HEK293 (cell line): ENCODE measurements at regions of chr16 and their contacts with region 1.

Region 1: DNA sequence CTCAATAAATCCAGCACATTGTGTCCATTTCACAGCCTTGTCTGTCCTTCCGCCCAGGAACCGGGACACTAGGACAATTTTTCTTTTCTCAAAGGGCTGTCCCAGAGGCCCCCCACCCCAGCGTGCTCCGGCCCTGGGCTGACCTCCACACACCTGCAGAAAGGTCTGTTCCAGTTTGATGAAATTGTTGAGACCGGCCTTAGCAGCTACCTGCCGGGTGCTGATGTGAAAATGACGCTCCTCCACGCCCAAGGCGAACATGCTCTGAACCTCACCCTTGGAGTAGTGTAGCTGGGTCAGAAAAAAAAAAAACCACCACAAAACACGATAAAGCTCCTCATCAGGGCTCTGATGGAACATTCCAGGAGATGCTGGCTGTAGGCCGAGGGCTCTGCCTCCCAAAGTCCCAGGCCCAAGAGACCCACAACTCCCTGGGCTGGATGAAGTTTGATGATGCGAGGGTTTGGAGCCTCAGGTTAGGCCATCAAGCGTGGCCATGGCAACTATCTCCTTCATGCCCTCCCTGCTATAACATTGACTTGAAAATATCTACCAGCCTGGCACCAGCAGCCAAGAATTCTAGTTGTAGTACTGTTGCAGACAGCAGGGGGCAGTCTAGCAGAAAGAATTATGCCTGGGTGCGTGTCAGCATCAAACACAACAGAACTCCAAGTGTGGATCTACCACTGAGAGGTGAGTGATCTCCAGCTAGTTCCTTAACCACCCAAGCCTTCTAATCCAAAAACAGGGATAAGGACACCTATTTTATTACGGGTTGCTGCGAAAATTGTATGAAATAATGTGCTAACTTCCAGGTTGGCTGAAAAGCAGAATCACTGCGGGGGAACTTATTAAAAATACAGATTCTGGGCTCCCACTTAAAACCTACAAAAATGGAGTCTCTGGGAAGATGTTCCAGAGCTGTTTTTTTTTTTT is 62.1 kb downstream of the RMI2 start:
- H3K4me3 ChIP-seq: no peak overlapping the region
- H3K27ac ChIP-seq: no peak overlapping the region
- H3K4me1 ChIP-seq: no peaks in the 10 kb centered on the region
- CTCF ChIP-seq: peak; percentile 50; the same call in 1 of the 2 replicates

Region 2: DNA sequence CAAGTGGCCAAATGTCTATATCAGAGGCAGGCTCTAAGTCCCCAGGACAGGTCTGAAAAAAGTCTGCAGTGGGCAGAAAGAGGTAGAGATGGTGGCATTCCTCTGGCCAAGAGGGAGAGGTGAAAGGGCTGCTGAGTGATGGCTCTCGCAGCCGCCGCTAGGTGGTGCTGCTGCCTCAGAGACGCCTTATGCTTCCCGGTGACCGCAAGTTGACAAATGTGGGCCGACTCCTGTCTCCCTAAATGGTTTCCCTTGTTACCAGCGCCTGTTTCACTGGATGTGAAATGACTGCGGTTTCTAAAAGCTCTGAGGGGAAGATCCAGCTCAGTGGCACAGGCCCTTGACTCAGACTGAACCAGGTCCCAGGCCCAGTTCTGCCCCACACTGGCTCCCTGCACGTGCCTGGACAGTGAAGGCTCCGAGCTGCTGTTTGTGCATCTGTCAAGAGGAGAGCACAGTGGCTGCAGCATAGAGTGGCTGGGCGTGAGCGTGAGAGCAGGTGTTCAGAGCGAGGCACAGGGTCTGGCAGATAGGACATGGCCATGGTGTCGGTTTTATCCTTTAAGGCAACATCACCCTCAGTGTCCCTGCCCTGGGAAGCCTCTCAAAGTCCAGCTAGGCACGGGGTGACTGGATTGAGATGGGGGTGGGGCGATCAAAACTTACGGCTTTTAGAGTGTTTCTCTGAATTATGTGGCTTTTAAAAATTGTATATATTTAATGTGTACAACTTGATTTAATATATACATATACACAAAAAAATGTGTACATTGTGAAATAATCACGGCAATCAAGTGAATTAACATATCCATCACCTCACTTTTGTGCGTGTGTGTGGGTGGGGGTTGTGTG is 443.1 kb before region 1 on chr16:
- CTCF ChIA-PET with region 1: interaction called, 25 read pairs
- POLR2A ChIA-PET with region 1: no interaction called
- H3K4me3 ChIP-seq: no peak overlapping the region
- H3K27ac ChIP-seq: no peak overlapping the region
- H3K4me1 ChIP-seq: no peaks in the 10 kb centered on the region
- CTCF ChIP-seq: peak; percentile 84

Region 3: GRCh38 chr16:11164482-11165270 is 242.6 kb before region 1 on chr16:
- CTCF ChIA-PET with region 1: no interaction called
- POLR2A ChIA-PET with region 1: no interaction called
- H3K4me3 ChIP-seq: no peak overlapping the region
- H3K27ac ChIP-seq: no peak overlapping the region; the same call in 1 of the 2 replicates
- H3K4me1 ChIP-seq: peaks cover 10% of the 10 kb centered on the region
- CTCF ChIP-seq: no peak

Region 4: GRCh38 chr16:11396241-11397048 is 10.9 kb before region 1 on chr16:
- CTCF ChIA-PET with region 1: interaction called, 52 read pairs
- POLR2A ChIA-PET with region 1: no interaction called
- H3K4me3 ChIP-seq: no peak overlapping the region
- H3K27ac ChIP-seq: no peak overlapping the region
- H3K4me1 ChIP-seq: no peaks in the 10 kb centered on the region
- CTCF ChIP-seq: peak; percentile 93

Region 5: GRCh38 chr16:11437069-11437468 is 29.8 kb after region 1 on chr16:
- CTCF ChIA-PET with region 1: interaction called, 13 read pairs
- POLR2A ChIA-PET with region 1: no interaction called
- H3K4me3 ChIP-seq: no peak overlapping the region
- H3K27ac ChIP-seq: no peak overlapping the region
- H3K4me1 ChIP-seq: no peaks in the 10 kb centered on the region
- CTCF ChIP-seq: no peak

Region 6: DNA sequence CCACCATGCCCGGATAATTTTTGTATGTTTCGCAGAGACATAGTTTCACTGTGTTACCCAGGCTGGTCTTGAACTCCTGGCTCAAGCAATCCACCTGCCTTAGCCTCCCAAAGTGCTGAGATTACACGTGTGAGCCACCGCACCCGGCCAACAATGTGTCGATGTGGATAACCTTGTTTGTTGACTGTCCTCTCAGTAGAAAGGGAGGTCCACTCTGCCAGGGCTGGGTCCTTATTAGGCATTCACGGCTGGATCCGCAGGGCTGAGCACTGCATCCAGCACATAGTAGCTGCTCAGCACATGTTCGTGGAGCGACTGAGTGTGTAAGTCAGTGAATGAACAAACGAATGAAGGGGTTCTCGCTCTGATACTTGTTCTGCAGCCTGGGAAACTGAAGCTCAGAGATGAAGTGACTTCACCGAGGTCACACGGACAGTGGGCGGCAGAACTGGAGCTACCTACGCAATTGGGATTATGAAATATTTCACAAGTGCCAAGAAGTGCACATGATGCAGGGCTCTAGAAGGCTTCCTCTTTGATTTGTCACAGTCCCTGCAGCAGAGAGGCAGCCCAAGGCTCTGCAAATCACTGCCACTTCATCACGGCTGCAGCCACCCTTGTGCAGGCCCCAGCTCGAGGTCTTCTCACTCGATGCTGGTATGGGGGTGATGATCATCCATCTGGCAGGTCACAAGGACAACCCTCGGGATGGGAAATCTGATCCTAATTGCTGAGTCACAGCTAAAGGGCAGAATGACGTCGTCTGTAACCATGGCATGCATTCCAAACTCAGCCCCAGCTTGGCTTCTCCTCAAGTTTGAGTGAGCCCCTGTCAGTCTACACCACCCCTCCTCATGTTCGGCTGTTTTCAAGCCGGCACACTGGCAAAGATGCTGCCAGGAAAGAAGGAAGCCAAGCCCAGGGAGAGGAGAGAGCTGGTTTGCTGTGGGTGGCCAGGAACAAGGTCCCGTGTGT is 232.9 kb after region 1 on chr16:
- CTCF ChIA-PET with region 1: interaction called, 25 read pairs
- POLR2A ChIA-PET with region 1: no interaction called
- H3K4me3 ChIP-seq: no peak overlapping the region
- H3K27ac ChIP-seq: no peak overlapping the region
- H3K4me1 ChIP-seq: 0 out of 2 replicates have a peak, but pooled peaks cover 2% of the 10 kb centered on the region
- CTCF ChIP-seq: no peak

Region 7: DNA sequence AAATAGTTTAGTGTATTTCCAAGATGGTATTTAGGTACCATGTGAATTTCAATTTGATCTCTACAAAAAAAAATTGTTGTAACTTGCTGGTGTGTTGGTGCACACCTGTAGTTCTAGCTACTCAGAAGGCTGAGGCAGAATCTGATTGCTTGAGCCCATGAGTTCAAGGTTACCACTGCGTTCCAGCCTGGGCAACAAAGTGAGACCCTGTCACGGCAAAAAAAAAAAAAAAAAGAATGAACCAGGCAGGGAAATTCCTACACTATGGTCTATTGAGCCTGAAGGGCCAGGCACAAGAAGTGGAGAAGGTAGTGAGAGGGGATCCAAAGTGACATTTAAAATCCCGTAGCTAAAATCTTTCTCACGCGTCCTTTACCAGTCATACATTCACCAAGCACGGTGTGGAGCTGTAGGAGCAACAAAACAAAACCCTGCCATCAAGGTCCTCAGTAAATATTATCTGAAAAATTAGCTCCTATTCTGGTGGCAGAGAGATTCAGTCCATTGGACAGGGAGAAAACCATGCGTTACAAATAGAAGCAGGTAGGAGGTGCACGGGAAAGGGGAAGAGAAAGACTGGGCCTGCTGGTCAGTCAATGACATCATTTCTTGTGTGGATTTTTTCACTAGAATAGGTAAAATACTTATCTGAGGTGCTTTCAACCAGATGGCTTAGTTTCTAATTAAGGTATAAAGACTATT is 308.1 kb after region 1 on chr16:
- CTCF ChIA-PET with region 1: interaction called, 32 read pairs
- POLR2A ChIA-PET with region 1: no interaction called
- H3K4me3 ChIP-seq: no peak overlapping the region
- H3K27ac ChIP-seq: no peak overlapping the region
- H3K4me1 ChIP-seq: no peaks in the 10 kb centered on the region
- CTCF ChIP-seq: no peak

Region 8: GRCh38 chr16:11816103-11816502 is 408.8 kb after region 1 on chr16:
- CTCF ChIA-PET with region 1: interaction called, 13 read pairs
- POLR2A ChIA-PET with region 1: no interaction called
- H3K4me3 ChIP-seq: no peak overlapping the region
- H3K27ac ChIP-seq: no peak overlapping the region
- H3K4me1 ChIP-seq: no peaks in the 10 kb centered on the region
- CTCF ChIP-seq: no peak